B cell (primary cell): ENCODE measurements at regions of chr7 and their contacts with region 1.

Region 1: DNA sequence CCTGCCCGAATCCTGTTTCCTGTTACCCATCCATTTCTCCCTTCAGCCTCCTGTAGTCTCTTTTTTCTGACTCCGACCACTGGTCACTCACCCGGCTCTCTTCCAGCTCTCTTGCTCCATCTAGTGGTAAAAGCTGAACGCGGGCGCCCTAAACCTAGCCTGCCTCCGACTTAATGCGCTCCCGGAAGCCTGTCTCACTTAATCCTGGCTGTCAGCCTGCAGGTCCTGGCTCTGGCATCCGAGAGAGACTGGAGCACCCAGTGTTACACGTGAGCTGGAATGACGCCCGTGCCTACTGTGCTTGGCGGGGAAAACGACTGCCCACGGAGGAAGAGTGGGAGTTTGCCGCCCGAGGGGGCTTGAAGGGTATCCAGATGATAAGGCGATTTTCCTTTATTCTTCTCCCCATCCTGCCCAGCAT is 10.3 kb downstream of the SUMF2 start:
- DNase-seq: peak; percentile 80
- ATAC-seq: peak; percentile 95
- H3K4me3 ChIP-seq: no peak overlapping the region
- H3K4me3 Mint-ChIP-seq: no peak overlapping the region
- H3K27ac ChIP-seq: no peak overlapping the region
- H3K27ac Mint-ChIP-seq: peak overlapping the region; percentile 12
- H3K4me1 ChIP-seq: no peaks in the 10 kb centered on the region
- H3K4me1 Mint-ChIP-seq: peaks cover 5% of the 10 kb centered on the region
- H3K27me3 ChIP-seq: no peaks in the 10 kb centered on the region
- H3K27me3 Mint-ChIP-seq: no peaks in the 10 kb centered on the region
- CTCF ChIP-seq: peak; percentile 99

Region 2: GRCh38 chr7:55432939-55433784 is 641.2 kb before region 1 on chr7:
- CTCF ChIA-PET with region 1: no interaction called
- POLR2A ChIA-PET with region 1: no interaction called
- intact Hi-C with region 1: loop called (anchors 10 kb)
- DNase-seq: peak; percentile 39
- ATAC-seq: peak; percentile 60
- H3K4me3 ChIP-seq: no peak overlapping the region
- H3K4me3 Mint-ChIP-seq: no peak overlapping the region
- H3K27ac ChIP-seq: no peak overlapping the region
- H3K27ac Mint-ChIP-seq: no peak overlapping the region
- H3K4me1 ChIP-seq: no peaks in the 10 kb centered on the region
- H3K4me1 Mint-ChIP-seq: peaks cover 3% of the 10 kb centered on the region
- H3K27me3 ChIP-seq: no peaks in the 10 kb centered on the region
- H3K27me3 Mint-ChIP-seq: no peaks in the 10 kb centered on the region
- CTCF ChIP-seq: peak; percentile 71

Region 3: GRCh38 chr7:55641273-55641691 is 433.1 kb before region 1 on chr7:
- CTCF ChIA-PET with region 1: interaction called, 121 read pairs
- POLR2A ChIA-PET with region 1: no interaction called
- intact Hi-C with region 1: no loop called
- DNase-seq: peak; percentile 74
- ATAC-seq: peak; percentile 79
- H3K4me3 ChIP-seq: no peak overlapping the region
- H3K4me3 Mint-ChIP-seq: no peak overlapping the region
- H3K27ac ChIP-seq: no peak overlapping the region
- H3K27ac Mint-ChIP-seq: no peak overlapping the region
- H3K4me1 ChIP-seq: peaks cover 5 to 7% of the 10 kb centered on the region in 2 donors
- H3K4me1 Mint-ChIP-seq: peaks cover 5% of the 10 kb centered on the region
- H3K27me3 ChIP-seq: no peaks in the 10 kb centered on the region
- H3K27me3 Mint-ChIP-seq: peaks cover 4% of the 10 kb centered on the region
- CTCF ChIP-seq: peak; percentile 90

Region 4: DNA sequence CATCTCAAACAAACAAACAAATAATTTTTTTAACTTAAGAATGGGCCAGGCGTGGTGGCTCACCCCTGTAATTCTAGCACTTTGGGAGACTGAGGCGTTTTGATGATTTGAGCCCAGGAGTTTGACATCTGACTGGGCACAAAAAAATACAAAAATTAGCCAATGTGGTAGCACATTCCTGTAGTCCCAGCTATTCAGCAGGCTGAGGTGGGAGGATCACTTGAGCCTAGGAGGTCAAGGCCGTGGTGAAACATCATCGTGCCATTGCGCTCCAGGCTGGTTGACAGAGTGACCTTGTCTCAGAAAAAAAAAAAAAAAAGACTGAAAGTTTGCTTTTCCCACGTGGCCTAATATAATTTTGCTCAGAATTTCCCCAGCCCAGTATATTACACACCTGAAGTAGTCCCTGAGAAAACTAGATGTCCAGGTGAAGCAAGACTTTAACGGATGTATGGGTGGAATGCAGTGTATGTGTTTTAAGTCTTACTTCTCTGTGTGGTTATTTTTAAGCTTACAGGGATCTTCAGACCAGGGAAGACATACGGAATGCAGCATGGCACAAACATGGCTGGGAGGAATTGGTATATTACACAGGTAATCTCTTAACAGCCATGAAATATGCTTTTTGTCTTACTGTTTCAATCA is 77.4 kb before region 1 on chr7:
- CTCF ChIA-PET with region 1: interaction called, 24 read pairs
- POLR2A ChIA-PET with region 1: no interaction called
- intact Hi-C with region 1: no loop called
- DNase-seq: no peak
- ATAC-seq: no peak
- H3K4me3 ChIP-seq: no peak overlapping the region
- H3K4me3 Mint-ChIP-seq: no peak overlapping the region
- H3K27ac ChIP-seq: no peak overlapping the region
- H3K27ac Mint-ChIP-seq: no peak overlapping the region
- H3K4me1 ChIP-seq: no peaks in the 10 kb centered on the region
- H3K4me1 Mint-ChIP-seq: peaks cover 1% of the 10 kb centered on the region
- H3K27me3 ChIP-seq: no peaks in the 10 kb centered on the region
- H3K27me3 Mint-ChIP-seq: no peaks in the 10 kb centered on the region
- CTCF ChIP-seq: no peak

Region 5: DNA sequence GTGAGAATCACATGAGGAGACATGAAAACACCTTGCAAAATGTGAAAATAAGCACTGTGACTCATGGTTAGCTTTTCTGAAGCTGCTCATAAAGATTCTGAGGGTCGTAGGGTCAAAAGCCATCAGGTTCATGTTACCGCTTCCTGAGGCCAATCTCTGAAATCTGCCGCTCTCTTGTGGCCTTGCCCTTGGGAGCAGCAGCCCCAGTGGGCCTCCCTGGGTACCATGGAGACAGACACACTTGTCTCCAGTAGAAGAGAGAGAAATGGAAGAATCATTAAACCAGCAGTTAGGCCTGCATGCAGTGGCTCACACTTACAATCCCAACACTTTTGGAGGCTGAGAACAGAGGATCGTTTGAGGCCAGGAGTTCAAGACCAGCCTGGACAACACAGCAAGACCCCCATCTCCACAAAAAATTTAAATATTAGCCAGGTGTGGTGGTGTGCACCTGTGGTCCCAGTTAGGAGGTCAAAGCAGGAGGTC is 67.2 kb before region 1 on chr7:
- CTCF ChIA-PET with region 1: interaction called, 97 read pairs
- POLR2A ChIA-PET with region 1: no interaction called
- intact Hi-C with region 1: no loop called
- DNase-seq: no peak
- ATAC-seq: no peak
- H3K4me3 ChIP-seq: no peak overlapping the region
- H3K4me3 Mint-ChIP-seq: no peak overlapping the region
- H3K27ac ChIP-seq: no peak overlapping the region
- H3K27ac Mint-ChIP-seq: no peak overlapping the region
- H3K4me1 ChIP-seq: no peaks in the 10 kb centered on the region
- H3K4me1 Mint-ChIP-seq: no peaks in the 10 kb centered on the region
- H3K27me3 ChIP-seq: no peaks in the 10 kb centered on the region
- H3K27me3 Mint-ChIP-seq: no peaks in the 10 kb centered on the region
- CTCF ChIP-seq: no peak

Region 6: GRCh38 chr7:56063882-56064625 is 10.3 kb before region 1 on chr7 and contains the start of gene SUMF2:
- CTCF ChIA-PET with region 1: interaction called, 22 read pairs
- POLR2A ChIA-PET with region 1: no interaction called
- intact Hi-C with region 1: no loop called
- DNase-seq: peak; percentile 95
- ATAC-seq: peak; percentile 92
- H3K4me3 ChIP-seq: peak within 1 kb of the TSS; percentile 63 to 94 (median 83)
- H3K4me3 Mint-ChIP-seq: peak within 1 kb of the TSS; percentile 86
- H3K27ac ChIP-seq: peak within 1 kb of the TSS; percentile 59 to 78
- H3K27ac Mint-ChIP-seq: peak within 1 kb of the TSS; percentile 94
- H3K4me1 ChIP-seq: peaks cover 5 to 12% of the 10 kb centered on the region in 2 donors
- H3K4me1 Mint-ChIP-seq: peaks cover 22% of the 10 kb centered on the region
- H3K27me3 ChIP-seq: no peaks in the 10 kb centered on the region
- H3K27me3 Mint-ChIP-seq: no peaks in the 10 kb centered on the region
- CTCF ChIP-seq: peak; percentile 21
- total RNA-seq, gene SUMF2: 112 and 115 TPM in 2 replicates